ENCODE measurements at regions of chr3 and their contacts with region 1.

Region 1: GRCh38 chr3:5426094-5426883 is 238.8 kb downstream of the EDEM1 start:
- DNase-seq: peak; percentile 67
- H3K4me3 ChIP-seq: no peak overlapping the region
- H3K27ac ChIP-seq: no peak overlapping the region
- H3K4me1 ChIP-seq: no peaks in the 10 kb centered on the region
- CTCF ChIP-seq: peak; percentile 95

Region 2: DNA sequence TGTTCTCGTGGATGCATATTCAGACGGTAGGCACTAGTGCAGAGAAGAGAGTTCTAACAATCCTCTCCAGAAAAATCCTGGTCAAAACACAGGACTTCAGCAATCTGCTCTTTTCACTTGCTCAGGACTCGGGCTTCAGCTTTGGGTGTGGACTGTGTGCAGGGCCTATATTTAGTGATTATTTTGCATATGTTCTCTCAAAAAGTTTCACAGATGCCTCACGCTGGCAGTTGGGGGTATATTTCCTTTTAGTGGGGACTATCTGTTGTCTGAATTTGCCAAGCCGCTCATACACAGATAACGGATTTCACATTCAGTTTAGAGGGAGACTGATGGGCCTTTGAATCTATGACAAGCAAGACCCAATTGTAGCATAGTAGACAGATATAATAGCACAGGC is 1681.5 kb before region 1 on chr3:
- CTCF ChIA-PET with region 1: no interaction called
- POLR2A ChIA-PET with region 1: no interaction called
- intact Hi-C with region 1: no loop called
- DNase-seq: peak; percentile 62
- H3K4me3 ChIP-seq: peak overlapping the region; percentile 40
- H3K27ac ChIP-seq: peak overlapping the region; percentile 60
- H3K4me1 ChIP-seq: peaks cover 26% of the 10 kb centered on the region
- CTCF ChIP-seq: 0 out of 2 replicates have a peak, but pooled peaks have one; percentile 24

Region 3: GRCh38 chr3:5226783-5227182 is 199.5 kb before region 1 on chr3:
- CTCF ChIA-PET with region 1: no interaction called
- POLR2A ChIA-PET with region 1: interaction called, 3 read pairs
- intact Hi-C with region 1: loop called (anchors 5 kb)
- DNase-seq: peak; percentile 49
- H3K4me3 ChIP-seq: no peak overlapping the region
- H3K27ac ChIP-seq: no peak overlapping the region
- H3K4me1 ChIP-seq: peaks cover 9% of the 10 kb centered on the region
- CTCF ChIP-seq: peak; percentile 72

Region 4: GRCh38 chr3:5304789-5305683 is 121.3 kb before region 1 on chr3:
- CTCF ChIA-PET with region 1: no interaction called
- POLR2A ChIA-PET with region 1: no interaction called
- intact Hi-C with region 1: loop called (anchors 10 kb)
- DNase-seq: peak; percentile 59
- H3K4me3 ChIP-seq: no peak overlapping the region
- H3K27ac ChIP-seq: no peak overlapping the region
- H3K4me1 ChIP-seq: no peaks in the 10 kb centered on the region
- CTCF ChIP-seq: peak; percentile 85

Region 5: GRCh38 chr3:5731094-5731493 is 304.8 kb after region 1 on chr3:
- CTCF ChIA-PET with region 1: no interaction called
- POLR2A ChIA-PET with region 1: no interaction called
- intact Hi-C with region 1: loop called (anchors 2 kb)
- DNase-seq: peak; percentile 2
- H3K4me3 ChIP-seq: no peak overlapping the region
- H3K27ac ChIP-seq: no peak overlapping the region
- H3K4me1 ChIP-seq: no peaks in the 10 kb centered on the region
- CTCF ChIP-seq: peak; percentile 51

Measured in OCI-LY7 (cell line).